Activated T-helper 1 cell treated with anti-CD3 and anti-CD28 coated beads, Interleukin-12 subunit alpha, Interleukin-12 subunit beta, Interleukin-2, Interleukin-4 antibody, amounts not matched to agents 30 ng/mL and 10 ng/mL and 1 ng/mL, durations not matched to agents 14 hours and 24 hours and 36 hours (primary cell): ENCODE measurements at regions of chr10 and their contacts with region 1.

Region 1: GRCh38 chr10:100508691-100509150 is 10.9 kb downstream of the SEC31B start:
- DNase-seq: peak; percentile 50
- H3K4me3 Mint-ChIP-seq: peak overlapping the region; percentile 77
- H3K27ac Mint-ChIP-seq: peak overlapping the region; percentile 88
- H3K4me1 Mint-ChIP-seq: peaks cover 92% of the 10 kb centered on the region
- H3K27me3 Mint-ChIP-seq: no peaks in the 10 kb centered on the region

Region 2: DNA sequence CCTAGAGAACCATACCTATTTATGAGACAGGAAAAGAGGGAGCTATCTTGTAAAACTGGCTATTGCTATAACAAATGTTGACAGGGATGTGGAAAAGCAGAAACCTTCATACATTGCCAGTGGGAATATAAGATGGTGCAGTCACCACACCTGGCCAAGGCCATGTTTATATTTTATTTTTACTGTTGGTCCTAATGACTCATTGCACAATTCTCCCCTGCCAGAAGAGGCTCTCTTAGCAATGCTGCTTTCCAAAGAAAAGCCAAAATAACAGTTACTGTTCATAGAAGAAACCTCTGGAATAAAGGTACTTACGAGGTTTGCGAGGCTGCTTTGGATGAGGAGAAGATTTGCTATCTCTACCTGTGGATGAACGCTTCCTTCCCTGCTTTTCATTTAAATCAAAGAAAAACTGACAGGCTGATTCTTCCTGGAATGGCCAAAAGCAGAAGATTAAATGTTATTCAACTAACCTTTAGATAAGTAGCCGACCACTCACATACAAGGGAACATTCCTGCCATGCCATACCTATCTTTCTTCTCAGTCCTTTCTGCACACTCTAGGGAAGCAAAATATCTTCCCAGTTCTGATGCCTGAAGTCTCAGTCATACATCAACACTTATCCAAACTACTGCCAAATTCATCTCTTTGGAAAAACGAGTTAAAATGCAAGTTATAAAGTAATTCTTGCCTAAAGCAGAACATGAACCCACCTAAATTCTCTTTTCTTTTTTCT is 263.1 kb before region 1 on chr10:
- intact Hi-C with region 1: no loop called
- DNase-seq: no peak
- H3K4me3 Mint-ChIP-seq: no peak overlapping the region
- H3K27ac Mint-ChIP-seq: no peak overlapping the region
- H3K4me1 Mint-ChIP-seq: peaks cover 2% of the 10 kb centered on the region
- H3K27me3 Mint-ChIP-seq: no peaks in the 10 kb centered on the region

Region 3: DNA sequence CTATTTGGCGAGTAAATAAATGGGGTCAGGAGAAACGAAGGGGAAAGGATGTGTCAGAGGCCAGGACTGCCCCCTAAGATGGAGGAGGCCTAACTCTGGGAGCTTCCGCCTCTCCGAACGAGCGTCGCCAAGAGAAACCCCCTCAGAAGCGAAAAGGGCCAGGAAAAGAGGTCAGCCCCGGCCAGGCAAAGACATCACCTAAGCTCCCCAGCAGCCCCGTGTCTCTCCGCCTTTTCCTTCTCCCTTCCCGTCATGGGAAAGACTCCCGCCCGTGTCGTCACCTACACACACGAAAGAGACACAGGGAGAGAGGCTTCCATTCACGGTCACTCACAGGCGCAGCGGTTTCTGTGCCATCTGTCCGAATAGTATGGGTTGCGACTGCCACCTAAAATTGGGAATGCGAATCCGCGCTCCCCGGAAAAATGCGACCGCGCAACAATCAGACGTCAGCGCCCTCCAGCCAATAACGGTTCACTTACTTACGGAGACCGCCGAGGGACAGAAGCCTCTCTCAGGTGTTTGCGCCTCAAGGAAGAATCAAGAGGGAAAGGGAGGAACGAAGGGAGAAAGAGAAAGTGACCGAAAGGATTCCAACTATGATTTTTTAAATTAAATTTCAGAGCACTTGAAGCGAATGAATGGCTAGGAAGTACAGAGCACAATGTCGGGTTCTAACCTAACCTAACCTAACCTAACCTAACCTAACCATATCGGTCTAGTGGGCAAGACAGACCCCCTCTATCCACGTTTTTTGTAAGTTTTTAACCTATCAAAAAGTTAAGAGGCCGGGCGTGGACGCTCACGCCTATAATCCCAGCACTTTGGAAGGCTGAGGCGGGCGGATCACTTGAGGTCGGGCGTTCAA is 241.2 kb before region 1 on chr10 and contains the start of gene CWF19L1:
- intact Hi-C with region 1: loop called (anchors 5 kb)
- DNase-seq: peak; percentile 72
- H3K4me3 Mint-ChIP-seq: peak within 1 kb of the TSS; percentile 99
- H3K27ac Mint-ChIP-seq: peak within 1 kb of the TSS; percentile 95
- H3K4me1 Mint-ChIP-seq: peaks cover 20% of the 10 kb centered on the region
- H3K27me3 Mint-ChIP-seq: no peaks in the 10 kb centered on the region
- total RNA-seq, gene CWF19L1: 37.3 and 42.6 TPM in 2 replicates

Region 4: DNA sequence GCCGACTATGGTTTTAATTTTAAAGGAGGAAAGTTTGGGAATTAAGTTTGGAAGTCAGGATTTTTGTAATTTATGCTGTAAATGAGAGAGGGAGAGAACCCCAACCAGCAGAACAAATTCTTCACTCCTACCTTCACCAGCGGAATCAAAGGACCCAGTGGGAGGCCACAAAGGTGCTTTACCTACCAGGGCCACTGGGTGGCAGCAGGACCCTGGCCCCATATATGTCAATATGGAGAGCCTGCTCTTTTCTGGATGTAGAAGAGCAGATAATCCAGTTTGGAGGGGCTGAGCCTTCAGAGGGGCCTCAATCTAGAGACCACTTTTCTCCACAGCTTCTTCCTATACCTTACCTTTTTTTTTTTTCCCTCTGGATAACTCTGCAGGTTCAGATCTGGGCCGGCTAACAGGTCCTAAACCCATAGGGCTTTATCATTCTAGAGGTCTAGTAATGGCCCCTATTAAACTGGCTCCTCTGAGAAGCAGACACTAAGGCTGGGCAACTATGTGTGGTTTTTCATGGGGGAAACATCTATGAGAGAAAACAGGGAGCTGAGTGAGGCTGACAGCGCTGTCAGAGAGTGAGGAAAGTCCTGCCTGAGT is 170.2 kb before region 1 on chr10:
- intact Hi-C with region 1: loop called (anchors 1 kb)
- DNase-seq: peak; percentile 67
- H3K4me3 Mint-ChIP-seq: no peak overlapping the region
- H3K27ac Mint-ChIP-seq: no peak overlapping the region
- H3K4me1 Mint-ChIP-seq: peaks cover 35% of the 10 kb centered on the region
- H3K27me3 Mint-ChIP-seq: peaks cover 17% of the 10 kb centered on the region

Region 5: DNA sequence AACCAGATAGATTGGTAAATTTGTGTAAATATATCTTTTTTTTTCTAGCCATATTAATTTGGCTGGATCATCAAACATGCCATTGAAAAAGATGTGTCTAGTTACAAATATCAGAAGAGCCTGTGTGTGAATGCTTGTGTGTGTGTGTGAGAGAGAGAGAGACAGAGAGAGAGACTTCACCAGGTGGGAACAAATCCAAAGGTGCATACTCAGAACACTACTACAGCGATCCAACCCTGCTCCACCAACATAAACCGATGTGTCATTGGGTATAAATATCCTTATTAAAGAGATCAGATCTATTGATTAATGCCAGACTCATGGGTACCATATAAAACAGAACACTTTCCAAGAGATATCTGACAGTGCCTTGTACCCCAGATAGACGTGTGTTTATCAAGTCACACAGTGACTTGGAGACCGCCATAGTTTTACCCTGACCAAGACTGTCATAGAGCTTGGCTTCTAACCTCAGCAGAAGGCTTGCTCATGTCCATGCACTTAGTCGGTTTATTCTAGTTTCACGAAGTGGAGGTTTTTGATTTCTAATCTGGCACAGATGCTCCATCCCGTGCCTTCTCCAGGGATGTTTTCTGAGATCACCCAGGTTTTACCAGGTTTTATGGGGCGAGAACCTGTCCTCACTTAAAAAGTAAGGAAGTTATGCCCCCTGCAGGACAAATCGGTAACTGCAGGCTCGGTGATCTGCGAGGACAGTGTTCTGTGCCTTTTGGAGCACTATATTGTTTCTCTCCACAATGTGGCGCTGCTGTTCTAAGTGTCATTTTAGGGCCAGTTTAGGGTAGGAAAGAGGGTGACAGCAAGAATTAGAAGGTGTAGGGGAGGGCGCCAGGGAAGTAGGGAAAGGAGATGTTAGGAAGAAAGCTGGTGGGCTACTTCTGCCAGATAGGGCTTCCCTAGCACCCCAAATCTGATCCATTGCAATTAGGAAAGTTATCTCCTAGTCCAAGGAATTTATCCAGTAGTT is 75.2 kb before region 1 on chr10:
- intact Hi-C with region 1: loop called (anchors 1 kb)
- DNase-seq: peak; percentile 89
- H3K4me3 Mint-ChIP-seq: no peak overlapping the region
- H3K27ac Mint-ChIP-seq: no peak overlapping the region
- H3K4me1 Mint-ChIP-seq: peaks cover 17% of the 10 kb centered on the region
- H3K27me3 Mint-ChIP-seq: no peaks in the 10 kb centered on the region

Region 6: GRCh38 chr10:100448951-100449350 is 59.8 kb before region 1 on chr10:
- intact Hi-C with region 1: no loop called
- DNase-seq: no peak
- H3K4me3 Mint-ChIP-seq: no peak overlapping the region
- H3K27ac Mint-ChIP-seq: no peak overlapping the region
- H3K4me1 Mint-ChIP-seq: no peaks in the 10 kb centered on the region
- H3K27me3 Mint-ChIP-seq: no peaks in the 10 kb centered on the region

Region 7: DNA sequence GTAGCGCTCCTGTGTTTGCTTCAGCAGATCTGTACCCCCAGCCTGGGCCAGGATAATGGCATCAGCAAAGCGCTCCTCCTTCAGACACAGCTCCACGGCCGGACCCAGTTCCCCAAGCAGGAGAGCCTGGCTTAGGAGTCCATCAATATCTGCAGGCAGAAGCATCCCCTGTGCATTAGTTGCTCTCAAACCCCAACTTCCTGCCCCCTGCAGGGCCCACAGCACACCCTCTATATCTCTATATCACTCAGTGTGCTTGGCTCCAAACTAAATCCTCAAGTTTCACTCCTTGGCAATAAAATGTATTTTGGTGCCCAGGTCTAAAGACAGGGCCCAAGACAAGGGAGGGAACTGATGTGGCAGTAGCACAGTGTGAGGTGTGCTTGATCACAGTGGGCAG is 10.7 kb before region 1 on chr10:
- intact Hi-C with region 1: loop called (anchors 1 kb)
- DNase-seq: no peak
- H3K4me3 Mint-ChIP-seq: peak overlapping the region; percentile 19
- H3K27ac Mint-ChIP-seq: peak overlapping the region; percentile 64
- H3K4me1 Mint-ChIP-seq: peaks cover 85% of the 10 kb centered on the region
- H3K27me3 Mint-ChIP-seq: no peaks in the 10 kb centered on the region

Region 8: GRCh38 chr10:100529475-100530298 is 21.0 kb after region 1 on chr10 and contains the start of gene NDUFB8:
- intact Hi-C with region 1: loop called (anchors 1 kb)
- DNase-seq: peak; percentile 86
- H3K4me3 Mint-ChIP-seq: peak within 1 kb of the TSS; percentile 92
- H3K27ac Mint-ChIP-seq: peak within 1 kb of the TSS; percentile 97
- H3K4me1 Mint-ChIP-seq: peaks cover 54% of the 10 kb centered on the region
- H3K27me3 Mint-ChIP-seq: no peaks in the 10 kb centered on the region
- total RNA-seq, gene NDUFB8: 292 and 304 TPM in 2 replicates